ENCODE measurements at regions of chr1 and their contacts with region 1.

Region 1: GRCh38 chr1:30405631-30406212 is 317.7 kb downstream of the MATN1 start:
- DNase-seq: no peak
- H3K4me3 ChIP-seq: no peak overlapping the region
- H3K27ac ChIP-seq: no peak overlapping the region
- H3K27me3 ChIP-seq: peaks cover 0 to 16% (median 0%) of the 10 kb centered on the region in 45 donors
- CTCF ChIP-seq: no peak

Region 2: GRCh38 chr1:29395736-29396437 is 1009.8 kb before region 1 on chr1:
- intact Hi-C with region 1: loop called in 1 of 2 experiments (anchors 2 kb)
- DNase-seq: no peak
- H3K4me3 ChIP-seq: no peak overlapping the region
- H3K27ac ChIP-seq: no peak overlapping the region
- H3K27me3 ChIP-seq: peaks cover 0 to 6% (median 0%) of the 10 kb centered on the region in 45 donors
- CTCF ChIP-seq: no peak

Region 3: DNA sequence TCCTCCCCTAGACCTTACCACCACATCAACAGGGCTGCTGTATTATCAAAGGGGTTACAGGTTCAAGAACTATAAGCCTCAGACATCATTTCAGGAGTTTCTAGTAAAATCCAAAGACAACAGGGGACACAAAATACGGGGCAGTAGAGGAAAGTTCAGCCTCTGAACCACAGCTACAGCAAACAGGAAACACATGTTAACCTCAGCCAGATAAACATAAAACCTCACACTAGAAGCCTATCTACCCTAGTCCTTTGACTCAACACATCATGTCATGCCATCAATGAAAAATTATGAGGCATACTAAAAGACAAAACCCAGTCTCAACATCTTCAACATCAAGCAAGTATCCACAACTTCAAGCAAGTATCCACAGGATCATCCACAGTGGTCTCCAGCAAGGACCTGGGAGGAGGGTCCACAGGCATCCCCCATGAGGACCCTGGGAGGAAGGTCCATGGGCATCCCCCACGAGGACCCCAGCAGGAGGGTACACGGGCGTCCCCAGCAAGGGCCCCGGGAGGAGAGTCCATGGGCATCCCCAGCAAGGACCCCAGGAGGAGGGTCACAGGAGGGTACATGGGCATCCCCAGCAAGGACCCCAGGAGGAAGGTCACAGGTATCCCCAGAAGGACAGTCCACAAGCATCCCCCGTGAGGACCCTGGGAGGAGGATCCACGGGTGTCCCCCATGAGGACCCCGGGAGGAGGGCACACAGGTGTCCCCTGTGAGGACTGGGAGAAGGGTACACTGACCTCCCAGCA is 122.3 kb before region 1 on chr1:
- intact Hi-C with region 1: no loop called
- DNase-seq: no peak
- H3K4me3 ChIP-seq: no peak overlapping the region
- H3K27ac ChIP-seq: no peak overlapping the region
- H3K27me3 ChIP-seq: peaks cover 0 to 17% (median 0%) of the 10 kb centered on the region in 45 donors
- CTCF ChIP-seq: no peak

Measured in dorsolateral prefrontal cortex (tissue), 120 donors.